ENCODE measurements at regions of chr17 and their contacts with region 1.

Region 1: GRCh38 chr17:1019451-1019850 is 22.5 kb downstream of the TIMM22 start:
- DNase-seq: no peak

Region 2: DNA sequence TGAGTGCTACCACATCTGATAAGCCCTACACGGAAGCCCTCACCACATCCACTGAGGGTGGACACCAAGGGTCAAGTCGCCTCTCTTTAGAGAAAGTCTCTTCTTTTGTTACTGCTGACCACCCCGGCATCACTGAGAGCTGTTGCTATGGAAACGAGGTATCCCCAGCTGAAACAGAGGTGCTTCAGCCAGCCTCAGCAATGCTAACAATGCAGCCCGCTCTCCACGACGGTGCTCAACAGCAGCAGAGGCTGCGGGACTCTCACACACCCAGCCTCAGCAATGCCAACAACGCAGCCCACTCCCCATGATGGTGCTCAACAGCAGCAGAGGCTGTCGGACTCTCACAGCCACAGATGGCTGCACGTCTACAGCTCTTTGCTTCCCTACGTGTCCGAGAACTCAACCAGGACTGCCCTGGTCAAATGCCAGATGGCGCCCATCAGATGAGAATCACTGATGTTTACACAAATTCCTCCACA is 346.2 kb before region 1 on chr17:
- intact Hi-C with region 1: no loop called
- DNase-seq: no peak

Region 3: DNA sequence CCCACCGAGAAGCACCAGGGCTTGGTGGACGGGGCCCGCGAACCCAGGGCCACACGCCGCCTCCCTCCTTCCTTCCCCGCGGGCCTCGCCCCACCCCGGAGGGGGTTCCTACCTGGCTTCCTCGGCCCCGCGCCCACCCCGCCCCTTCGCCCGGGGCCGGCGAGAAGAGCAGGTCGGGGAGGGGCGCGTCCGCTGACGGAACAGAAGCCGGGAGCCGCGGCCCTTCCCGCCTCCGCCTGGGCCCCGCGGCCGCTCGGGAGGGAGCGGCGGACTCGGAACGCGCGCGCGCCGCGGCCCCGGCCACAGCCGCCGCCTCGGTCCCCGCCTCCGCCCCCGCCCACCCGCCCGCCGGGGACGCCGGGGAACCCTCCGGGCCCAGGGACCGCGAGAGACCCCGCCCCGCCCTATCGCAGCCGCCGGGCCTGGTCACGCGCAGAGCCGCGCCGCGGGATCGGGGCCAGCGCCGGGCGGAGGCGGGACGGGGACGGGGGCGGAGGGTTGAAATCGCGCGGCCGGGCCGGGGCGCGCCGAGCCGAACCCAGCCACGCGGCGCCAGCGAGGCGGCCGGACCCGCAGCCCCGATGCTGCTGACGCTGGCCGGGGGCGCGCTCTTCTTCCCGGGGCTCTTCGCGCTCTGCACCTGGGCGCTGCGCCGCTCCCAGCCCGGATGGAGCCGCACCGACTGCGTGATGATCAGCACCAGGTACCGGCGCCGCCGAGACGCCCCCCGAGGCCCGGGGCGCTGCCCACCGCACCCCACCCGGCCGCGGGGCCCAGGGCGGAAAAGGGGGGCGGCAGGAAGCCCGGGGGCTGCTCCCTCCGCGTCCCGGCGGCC is 287.2 kb before region 1 on chr17 and contains the start of gene TLCD3A:
- intact Hi-C with region 1: no loop called
- DNase-seq: no peak
- total RNA-seq, gene TLCD3A: 5.1 TPM

Region 4: GRCh38 chr17:1047177-1047878 is 27.9 kb after region 1 on chr17:
- intact Hi-C with region 1: loop called (anchors 1 kb)
- DNase-seq: no peak

Region 5: DNA sequence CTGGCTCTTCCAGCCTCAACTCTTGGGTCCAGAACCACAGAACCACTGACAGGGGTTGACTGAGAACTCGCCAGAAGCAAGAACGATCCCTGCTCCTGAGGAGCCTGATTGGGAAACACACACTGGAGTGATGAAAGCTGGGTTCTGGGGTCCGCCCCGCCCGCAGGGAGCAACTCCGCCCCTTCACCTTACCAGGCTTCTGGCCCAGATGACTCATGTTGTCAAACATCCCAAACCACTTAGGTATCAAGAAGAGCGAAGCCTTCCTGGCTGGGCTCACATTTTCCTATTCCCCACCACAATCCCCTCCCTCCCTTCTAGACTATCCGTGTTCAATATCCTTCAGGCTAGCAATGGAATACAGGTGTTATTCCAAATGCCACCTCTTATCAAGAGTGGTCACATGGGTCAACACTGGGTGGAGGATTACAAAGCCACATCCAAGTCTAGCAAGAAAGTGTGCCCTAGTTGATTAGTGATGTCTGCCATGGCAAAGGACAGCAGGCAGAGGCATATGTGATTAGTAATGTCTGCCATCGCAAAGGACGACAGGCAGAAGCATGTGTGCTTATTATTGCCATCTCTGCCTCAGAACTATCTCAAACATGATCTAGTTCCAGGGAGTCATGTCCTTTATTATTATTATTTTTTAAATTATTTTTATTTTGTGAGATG is 48.0 kb after region 1 on chr17:
- intact Hi-C with region 1: no loop called
- DNase-seq: no peak